Mammary epithelial cell (primary cell): ENCODE measurements at regions of chr21 and their contacts with region 1.

Region 1: GRCh38 chr21:41966041-41966684 is 12.3 kb upstream of the C2CD2 start:
- DNase-seq: no peak
- H3K4me3 ChIP-seq: no peak overlapping the region
- H3K27ac ChIP-seq: no peak overlapping the region
- H3K4me1 ChIP-seq: no peaks in the 10 kb centered on the region
- H3K27me3 ChIP-seq: no peaks in the 10 kb centered on the region
- CTCF ChIP-seq: no peak

Region 2: DNA sequence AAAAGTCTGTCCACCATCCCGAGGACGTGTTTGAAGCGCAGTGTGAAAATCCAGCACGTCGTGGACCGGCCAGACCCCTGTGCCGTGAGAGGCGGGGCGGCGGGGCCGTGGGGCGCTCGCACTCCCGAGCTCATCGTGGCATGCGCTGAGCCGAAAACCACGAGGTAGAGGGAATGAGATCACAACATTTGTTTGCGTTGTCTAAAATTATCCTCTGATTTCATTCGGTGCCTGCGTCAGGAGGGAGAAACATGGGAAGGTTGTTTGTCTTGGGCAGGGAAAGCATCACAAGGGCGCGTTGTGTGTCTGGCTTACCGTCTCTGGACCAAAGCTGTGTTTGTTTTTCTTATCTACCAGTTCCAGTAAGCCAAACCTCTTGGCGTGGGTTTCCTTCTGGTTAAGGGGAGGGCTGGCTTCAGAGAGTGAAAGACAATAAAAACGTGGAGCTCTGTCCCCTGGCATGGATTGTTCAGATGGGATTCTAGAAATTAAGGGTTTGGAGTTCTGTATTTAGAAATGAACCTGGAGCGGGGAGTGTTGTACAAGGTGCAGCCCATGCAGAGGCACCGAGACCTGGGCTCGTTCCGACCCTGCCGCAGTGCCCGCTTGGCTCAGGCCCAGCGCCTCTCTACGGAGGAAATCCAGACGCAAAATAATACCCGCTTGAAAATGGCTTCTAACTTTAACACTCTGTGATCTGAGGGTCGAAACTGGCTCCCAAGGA is 718.4 kb before region 1 on chr21:
- CTCF ChIA-PET with region 1: no interaction called
- dilution Hi-C with region 1: no loop called
- in situ Hi-C with region 1: no loop called
- intact Hi-C with region 1: no loop called
- DNase-seq: no peak
- H3K4me3 ChIP-seq: no peak overlapping the region
- H3K27ac ChIP-seq: no peak overlapping the region
- H3K4me1 ChIP-seq: peaks cover 26% of the 10 kb centered on the region
- H3K27me3 ChIP-seq: no peaks in the 10 kb centered on the region
- CTCF ChIP-seq: no peak

Region 3: DNA sequence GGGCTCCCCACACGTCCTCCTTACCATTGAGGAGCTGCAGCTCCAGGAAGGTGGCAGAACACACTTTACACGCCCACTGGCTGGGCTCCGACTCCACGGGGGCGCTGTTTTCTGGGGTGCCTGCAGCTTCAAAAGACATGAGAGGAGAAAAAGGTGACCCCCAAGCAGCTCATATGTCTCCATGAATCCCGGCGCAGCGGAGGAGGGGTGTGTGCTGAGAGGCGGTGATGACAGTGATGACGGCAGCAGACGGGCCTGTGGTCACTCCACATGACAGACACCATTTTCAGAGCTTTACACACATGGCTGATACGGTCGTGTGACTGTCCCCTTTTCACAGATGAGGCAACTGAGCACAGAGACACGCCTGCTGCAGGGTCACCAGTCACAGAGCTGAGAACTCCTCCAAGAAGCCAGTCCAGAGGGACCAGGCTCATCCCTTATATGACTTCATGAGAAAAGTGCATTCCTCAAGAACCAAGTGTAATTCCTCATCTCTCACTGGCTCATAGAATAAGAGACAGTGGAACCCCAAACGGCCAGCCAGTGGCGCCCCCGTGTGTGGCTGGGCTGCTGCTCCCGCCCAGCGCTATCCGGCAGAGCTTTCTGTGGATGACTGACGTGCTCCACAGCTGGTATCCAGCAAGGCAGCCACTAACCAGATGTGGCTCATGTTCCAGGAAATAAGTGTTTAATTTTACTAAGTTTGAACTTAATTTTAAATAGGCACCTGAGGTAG is 118.9 kb before region 1 on chr21:
- CTCF ChIA-PET with region 1: no interaction called
- dilution Hi-C with region 1: no loop called
- in situ Hi-C with region 1: no loop called
- intact Hi-C with region 1: no loop called
- DNase-seq: no peak
- H3K4me3 ChIP-seq: no peak overlapping the region
- H3K27ac ChIP-seq: no peak overlapping the region
- H3K4me1 ChIP-seq: no peaks in the 10 kb centered on the region
- H3K27me3 ChIP-seq: no peaks in the 10 kb centered on the region
- CTCF ChIP-seq: no peak

Region 4: DNA sequence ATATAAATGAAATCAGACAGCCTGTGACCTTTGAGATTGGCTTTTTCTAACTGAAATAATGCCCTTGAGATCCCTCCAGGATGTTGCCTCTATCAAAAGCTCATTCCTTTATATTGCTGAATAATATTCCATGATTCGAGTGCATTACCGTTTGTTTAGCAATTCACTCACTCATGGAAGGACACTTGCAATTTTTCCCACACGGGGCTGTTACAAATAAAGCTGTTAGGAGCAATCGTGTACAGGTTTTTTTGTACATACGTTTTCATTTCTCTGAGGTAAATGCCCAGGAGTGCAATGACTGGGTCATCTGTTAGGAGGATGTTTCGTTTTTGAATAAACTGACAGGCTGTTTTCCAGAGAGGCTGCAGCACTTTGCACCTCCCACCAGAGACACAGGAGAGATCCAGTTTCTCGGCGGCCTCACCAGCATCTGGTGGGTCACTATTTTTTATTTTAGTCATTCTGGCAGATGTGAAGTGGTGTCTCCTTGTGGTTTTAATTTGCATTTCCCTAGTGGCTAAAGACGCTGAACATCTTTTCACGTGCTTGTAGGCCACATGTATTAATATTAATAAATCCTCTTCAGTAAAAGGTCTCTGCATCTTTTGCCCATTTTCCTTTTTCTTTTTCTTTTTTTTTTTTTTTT is 98.0 kb before region 1 on chr21:
- CTCF ChIA-PET with region 1: no interaction called
- dilution Hi-C with region 1: loop called (anchors 10 kb)
- in situ Hi-C with region 1: no loop called
- intact Hi-C with region 1: no loop called
- DNase-seq: no peak
- H3K4me3 ChIP-seq: no peak overlapping the region
- H3K27ac ChIP-seq: no peak overlapping the region
- H3K4me1 ChIP-seq: peaks cover 4% of the 10 kb centered on the region
- H3K27me3 ChIP-seq: no peaks in the 10 kb centered on the region
- CTCF ChIP-seq: no peak

Region 5: GRCh38 chr21:41895643-41896493 is 70.3 kb before region 1 on chr21:
- CTCF ChIA-PET with region 1: no interaction called
- dilution Hi-C with region 1: no loop called
- in situ Hi-C with region 1: no loop called
- intact Hi-C with region 1: no loop called
- DNase-seq: no peak
- H3K4me3 ChIP-seq: no peak overlapping the region
- H3K27ac ChIP-seq: no peak overlapping the region
- H3K4me1 ChIP-seq: no peaks in the 10 kb centered on the region
- H3K27me3 ChIP-seq: no peaks in the 10 kb centered on the region
- CTCF ChIP-seq: no peak